Esophagus muscularis mucosa (tissue), 4 donors: ENCODE measurements at regions of chr20 and their contacts with region 1.

Region 1: GRCh38 chr20:23441850-23442313 is 2.4 kb downstream of the CSTL1 start:
- DNase-seq: no peak
- H3K4me3 ChIP-seq: no peak overlapping the region
- H3K27ac ChIP-seq: no peak overlapping the region
- H3K4me1 ChIP-seq: peaks cover 0 to 16% (median 0%) of the 10 kb centered on the region in 4 donors
- H3K27me3 ChIP-seq: no peaks in the 10 kb centered on the region
- CTCF ChIP-seq: peak; percentile 76 to 95 (median 83)
- EP300 ChIP-seq: no peak
- POLR2A ChIP-seq: no peak

Region 2: DNA sequence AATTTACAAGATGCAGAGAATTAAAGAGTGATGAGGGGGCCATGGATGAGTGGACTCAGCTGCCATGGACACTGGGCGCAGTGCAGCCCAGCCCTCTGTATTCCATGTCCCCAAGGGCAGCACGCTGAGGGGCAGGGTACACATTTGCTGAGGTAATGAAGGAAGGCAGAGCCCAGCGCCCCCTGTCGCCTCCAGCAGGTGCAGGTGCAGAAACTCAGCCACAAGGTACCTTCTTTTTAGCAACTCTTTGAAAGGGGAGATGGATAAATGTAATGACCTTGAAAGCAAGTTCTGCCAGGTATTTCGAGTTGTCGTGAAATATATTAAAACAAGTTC is 362.9 kb before region 1 on chr20:
- intact Hi-C with region 1: no loop called
- DNase-seq: no peak
- H3K4me3 ChIP-seq: no peak overlapping the region
- H3K27ac ChIP-seq: no peak overlapping the region
- H3K4me1 ChIP-seq: peaks cover 16 to 31% (median 24%) of the 10 kb centered on the region in 4 donors
- H3K27me3 ChIP-seq: no peaks in the 10 kb centered on the region
- CTCF ChIP-seq: peak in 1 of 3 experiments; percentile 27
- EP300 ChIP-seq: no peak
- POLR2A ChIP-seq: no peak

Region 3: DNA sequence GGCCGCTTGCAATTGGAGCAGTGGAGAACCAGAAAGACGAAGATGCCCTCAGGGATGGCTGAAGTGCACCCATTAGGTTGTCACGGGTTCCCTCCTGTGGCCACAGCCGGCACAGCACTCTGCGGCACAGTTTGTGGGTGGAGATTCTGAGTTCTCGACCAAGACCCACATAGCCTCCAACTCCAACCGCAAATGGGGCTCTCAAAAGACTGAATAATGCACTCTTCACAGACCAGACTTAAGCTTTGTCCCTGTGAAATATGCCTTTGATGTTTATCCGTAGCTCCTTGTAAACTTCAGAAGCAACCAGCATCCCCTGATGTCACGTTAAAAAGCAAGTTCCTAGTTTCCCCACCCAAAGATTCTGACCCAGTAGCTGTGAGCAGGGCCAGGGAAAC is 164.8 kb after region 1 on chr20:
- intact Hi-C with region 1: loop called (anchors 1 kb)
- DNase-seq: peak; percentile 94
- H3K4me3 ChIP-seq: no peak overlapping the region
- H3K27ac ChIP-seq: peak overlapping the region in 3 of 4 donors; percentile 8 to 63 (median 20)
- H3K4me1 ChIP-seq: peaks cover 0 to 52% (median 38%) of the 10 kb centered on the region in 4 donors
- H3K27me3 ChIP-seq: no peaks in the 10 kb centered on the region
- CTCF ChIP-seq: peak; percentile 82 to 97 (median 87)
- EP300 ChIP-seq: no peak
- POLR2A ChIP-seq: no peak

Region 4: DNA sequence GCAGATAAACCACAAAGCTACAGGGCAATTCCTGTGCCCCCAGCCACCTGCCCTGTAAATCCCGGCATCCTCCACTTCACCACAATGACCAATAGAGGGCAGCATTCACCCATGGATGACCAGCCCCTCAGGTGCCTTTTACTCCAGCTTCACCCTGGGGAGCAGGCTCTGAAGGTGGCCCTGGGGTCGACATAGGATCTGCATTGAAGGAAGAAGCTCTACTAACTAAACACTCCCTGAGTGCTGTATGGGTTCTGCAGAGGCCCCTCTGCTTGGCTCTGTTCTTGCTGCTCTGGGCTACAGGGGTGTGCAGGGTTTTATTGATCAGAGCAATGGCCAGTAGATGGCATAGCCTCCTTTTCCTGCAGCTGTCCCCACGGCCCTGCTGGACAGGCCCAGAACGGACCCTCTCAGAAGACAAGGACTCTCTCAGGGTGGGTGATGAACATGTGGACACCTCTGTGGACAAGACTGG is 226.6 kb after region 1 on chr20:
- intact Hi-C with region 1: loop called (anchors 10 kb)
- DNase-seq: peak; percentile 90
- H3K4me3 ChIP-seq: no peak overlapping the region
- H3K27ac ChIP-seq: no peak overlapping the region
- H3K4me1 ChIP-seq: peaks cover 0 to 3% (median 0%) of the 10 kb centered on the region in 4 donors
- H3K27me3 ChIP-seq: no peaks in the 10 kb centered on the region
- CTCF ChIP-seq: peak; percentile 73 to 88 (median 75)
- EP300 ChIP-seq: no peak
- POLR2A ChIP-seq: no peak